ENCODE measurements at regions of chr9 and their contacts with region 1.

Region 1: DNA sequence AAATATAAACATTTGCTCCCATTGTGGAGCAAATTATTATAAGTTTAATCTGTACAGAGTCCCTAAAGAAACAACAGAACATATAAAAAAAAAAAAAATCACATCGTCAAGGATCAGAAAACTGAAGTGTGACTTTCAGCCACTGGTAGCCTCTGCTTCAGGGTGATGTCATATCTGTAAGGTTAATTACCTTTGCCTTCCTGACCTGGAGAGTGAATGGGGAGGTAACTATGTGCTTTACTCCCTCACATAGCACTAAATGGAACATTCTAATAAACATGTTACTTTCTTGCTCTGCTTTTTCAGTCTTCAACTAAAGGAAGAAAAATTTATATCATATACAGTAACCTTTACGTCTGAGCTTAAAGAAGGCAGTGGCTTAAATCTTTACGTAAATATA is 70.3 kb upstream of the TRPM3 start:
- DNase-seq: no peak
- H3K4me3 ChIP-seq: no peak overlapping the region
- CTCF ChIP-seq: no peak

Region 2: GRCh38 chr9:70835323-70835722 is 356.4 kb before region 1 on chr9:
- in situ Hi-C with region 1: no loop called
- DNase-seq: no peak
- H3K4me3 ChIP-seq: no peak overlapping the region
- CTCF ChIP-seq: no peak

Region 3: GRCh38 chr9:71157731-71158130 is 34.0 kb before region 1 on chr9:
- in situ Hi-C with region 1: loop called (anchors 5 kb)
- DNase-seq: no peak
- H3K4me3 ChIP-seq: no peak overlapping the region
- CTCF ChIP-seq: no peak

Measured in astrocyte of the cerebellum (primary cell).